PC-3 (cell line): ENCODE measurements at regions of chr2 and their contacts with region 1.

Region 1: DNA sequence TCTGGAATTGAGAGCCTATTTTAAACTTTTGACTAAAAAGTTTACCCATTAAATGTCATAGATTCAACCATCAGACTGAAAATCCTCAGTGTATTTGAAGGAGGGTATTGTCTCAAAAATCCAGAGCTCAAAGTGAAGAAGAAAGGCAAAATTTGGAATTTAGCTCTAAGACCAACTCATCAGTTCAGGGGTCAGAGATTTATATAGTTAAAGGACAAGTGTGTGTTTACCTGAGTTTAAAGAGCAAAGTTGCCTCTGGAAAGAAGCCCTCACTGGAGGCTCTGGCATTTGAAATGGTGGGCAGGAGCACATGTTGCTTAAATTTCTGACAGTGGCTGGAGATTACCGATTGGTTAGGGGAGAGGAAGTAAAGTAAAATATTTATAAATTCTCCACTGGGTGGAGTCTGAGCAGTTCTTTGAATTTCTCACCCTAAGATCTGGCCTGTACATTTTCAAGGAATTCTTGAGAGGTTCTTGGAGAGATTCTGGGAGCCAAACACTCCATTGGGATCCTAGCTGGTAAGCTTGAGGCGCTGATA is at the start of gene KYNU:
- DNase-seq: peak; percentile 30
- ATAC-seq: no peak
- H3K4me3 ChIP-seq: no peak within 1 kb of the TSS
- H3K27ac ChIP-seq: peak within 1 kb of the TSS; percentile 98
- H3K4me1 ChIP-seq: peaks cover 69% of the 10 kb centered on the region
- H3K27me3 ChIP-seq: no peaks in the 10 kb centered on the region
- CTCF ChIP-seq: peak; percentile 48
- total RNA-seq, gene KYNU: 1.1 and 2.3 TPM in 2 replicates

Region 2: GRCh38 chr2:141528990-141529389 is 1348.3 kb before region 1 on chr2:
- CTCF ChIA-PET with region 1: no interaction called
- POLR2A ChIA-PET with region 1: no interaction called
- intact Hi-C with region 1: no loop called
- DNase-seq: no peak
- ATAC-seq: no peak
- H3K4me3 ChIP-seq: no peak overlapping the region
- H3K27ac ChIP-seq: no peak overlapping the region
- H3K4me1 ChIP-seq: no peaks in the 10 kb centered on the region; the same call in 1 of the 2 replicates
- H3K27me3 ChIP-seq: no peaks in the 10 kb centered on the region
- CTCF ChIP-seq: no peak

Region 3: GRCh38 chr2:142682528-142682927 is 194.8 kb before region 1 on chr2:
- CTCF ChIA-PET with region 1: no interaction called
- POLR2A ChIA-PET with region 1: no interaction called
- intact Hi-C with region 1: loop called (anchors 1 kb)
- DNase-seq: peak; percentile 42
- ATAC-seq: no peak; the same call in 1 of the 2 replicates
- H3K4me3 ChIP-seq: no peak overlapping the region
- H3K27ac ChIP-seq: no peak overlapping the region
- H3K4me1 ChIP-seq: no peaks in the 10 kb centered on the region
- H3K27me3 ChIP-seq: no peaks in the 10 kb centered on the region
- CTCF ChIP-seq: peak; percentile 66

Region 4: DNA sequence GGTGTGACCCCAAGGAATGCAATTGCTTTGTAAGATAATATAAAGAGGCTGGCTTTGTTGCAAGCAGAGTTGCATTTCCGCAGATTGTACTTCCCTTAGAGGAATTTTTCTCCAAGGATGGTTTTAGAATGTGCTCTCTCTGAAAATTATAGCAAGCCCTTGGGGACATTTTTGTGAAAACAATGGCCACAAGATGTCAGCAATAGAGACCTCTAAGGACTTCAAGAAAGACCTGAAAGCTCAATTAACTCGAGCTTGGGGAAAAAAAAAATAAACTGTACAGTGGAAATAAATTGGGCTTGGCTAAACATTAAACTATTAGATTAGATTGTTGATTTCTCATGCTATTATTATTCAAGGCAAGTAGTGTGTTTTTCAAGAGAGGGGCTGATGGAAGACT is 81.1 kb before region 1 on chr2:
- CTCF ChIA-PET with region 1: no interaction called
- POLR2A ChIA-PET with region 1: no interaction called
- intact Hi-C with region 1: loop called (anchors 1 kb)
- DNase-seq: no peak
- ATAC-seq: no peak
- H3K4me3 ChIP-seq: no peak overlapping the region
- H3K27ac ChIP-seq: no peak overlapping the region
- H3K4me1 ChIP-seq: no peaks in the 10 kb centered on the region
- H3K27me3 ChIP-seq: no peaks in the 10 kb centered on the region
- CTCF ChIP-seq: 0 out of 2 replicates have a peak, but pooled peaks have one; percentile 26

Region 5: GRCh38 chr2:142834021-142834420 is 43.3 kb before region 1 on chr2:
- CTCF ChIA-PET with region 1: no interaction called
- POLR2A ChIA-PET with region 1: no interaction called
- intact Hi-C with region 1: loop called (anchors 1 kb)
- DNase-seq: peak; percentile 76
- ATAC-seq: peak; percentile 90
- H3K4me3 ChIP-seq: peak overlapping the region; percentile 37; the same call in 1 of the 2 replicates
- H3K27ac ChIP-seq: peak overlapping the region; percentile 76
- H3K4me1 ChIP-seq: peaks cover 15% of the 10 kb centered on the region
- H3K27me3 ChIP-seq: no peaks in the 10 kb centered on the region
- CTCF ChIP-seq: no peak

Region 6: GRCh38 chr2:142944276-142944675 is 67.0 kb after region 1 on chr2:
- CTCF ChIA-PET with region 1: interaction called, 6 read pairs
- POLR2A ChIA-PET with region 1: no interaction called
- intact Hi-C with region 1: loop called (anchors 1 kb)
- DNase-seq: peak; percentile 88
- ATAC-seq: peak; percentile 82
- H3K4me3 ChIP-seq: no peak overlapping the region
- H3K27ac ChIP-seq: peak overlapping the region; percentile 90
- H3K4me1 ChIP-seq: peaks cover 43% of the 10 kb centered on the region
- H3K27me3 ChIP-seq: no peaks in the 10 kb centered on the region
- CTCF ChIP-seq: no peak

Region 7: GRCh38 chr2:143051465-143051864 is 174.2 kb after region 1 on chr2:
- CTCF ChIA-PET with region 1: no interaction called
- POLR2A ChIA-PET with region 1: no interaction called
- intact Hi-C with region 1: no loop called
- DNase-seq: no peak
- ATAC-seq: no peak
- H3K4me3 ChIP-seq: no peak overlapping the region
- H3K27ac ChIP-seq: no peak overlapping the region
- H3K4me1 ChIP-seq: no peaks in the 10 kb centered on the region
- H3K27me3 ChIP-seq: no peaks in the 10 kb centered on the region
- CTCF ChIP-seq: no peak

Region 8: DNA sequence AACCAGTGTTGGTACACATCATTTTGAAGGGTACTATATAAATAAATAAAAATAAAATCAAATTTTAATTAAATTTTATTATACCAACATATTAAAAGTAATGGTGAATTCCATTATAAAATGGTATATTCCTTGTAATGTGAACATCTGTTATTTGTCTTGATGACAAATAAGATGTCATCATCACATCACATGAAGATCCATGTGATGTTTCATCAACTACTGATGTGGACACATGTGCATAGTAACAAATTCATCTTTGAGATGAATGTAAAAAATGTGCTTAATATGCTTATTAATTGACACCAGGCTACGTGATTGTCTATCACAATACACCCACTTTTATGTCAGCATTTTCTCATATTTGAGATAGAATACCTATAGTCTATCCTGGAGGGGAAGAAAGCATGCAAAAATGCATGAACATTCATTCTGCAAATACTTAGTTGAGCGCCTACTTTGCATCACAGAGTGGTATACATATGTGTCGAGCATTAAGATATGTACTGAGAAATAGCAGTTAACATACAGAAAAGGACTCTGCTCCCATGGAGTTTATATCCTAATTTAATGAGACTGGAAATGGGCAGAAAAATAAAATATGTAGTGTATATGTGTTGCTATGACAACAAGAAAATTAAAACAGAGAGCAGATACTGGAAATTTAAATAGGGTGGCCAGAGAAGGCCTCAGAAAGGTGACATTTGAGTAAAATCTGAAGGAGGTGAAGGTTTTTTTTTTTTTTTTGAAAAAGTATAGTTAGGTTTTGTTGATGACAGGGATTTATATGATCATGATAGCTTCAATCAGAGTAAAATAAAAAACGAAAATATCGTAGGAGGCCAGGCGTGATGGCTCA is 533.0 kb after region 1 on chr2:
- CTCF ChIA-PET with region 1: no interaction called
- POLR2A ChIA-PET with region 1: no interaction called
- intact Hi-C with region 1: no loop called
- DNase-seq: no peak
- ATAC-seq: no peak
- H3K4me3 ChIP-seq: no peak overlapping the region
- H3K27ac ChIP-seq: no peak overlapping the region
- H3K4me1 ChIP-seq: no peaks in the 10 kb centered on the region
- H3K27me3 ChIP-seq: no peaks in the 10 kb centered on the region
- CTCF ChIP-seq: no peak